ENCODE measurements at regions of chr13 and their contacts with region 1.

Region 1: GRCh38 chr13:50123862-50124536 is 108.8 kb downstream of the KCNRG start:
- DNase-seq: peak; percentile 72 to 85
- H3K4me3 ChIP-seq: peak overlapping the region; percentile 52 to 62
- H3K27ac ChIP-seq: peak overlapping the region; percentile 92 to 93
- H3K4me1 ChIP-seq: no peaks in the 10 kb centered on the region
- H3K27me3 ChIP-seq: peaks cover 0 to 4% of the 10 kb centered on the region in 2 donors
- CTCF ChIP-seq: peak in 1 of 4 experiments; percentile 9
- POLR2A ChIP-seq: peak; percentile 78 to 85

Region 2: GRCh38 chr13:49792550-49793324 is 331.3 kb before region 1 on chr13 and contains the start of gene KPNA3:
- intact Hi-C with region 1: loop called (anchors 10 kb)
- DNase-seq: peak; percentile 95 to 96
- H3K4me3 ChIP-seq: peak within 1 kb of the TSS; percentile 45 to 86
- H3K27ac ChIP-seq: peak within 1 kb of the TSS; percentile 92 to 94
- H3K4me1 ChIP-seq: no peaks in the 10 kb centered on the region
- H3K27me3 ChIP-seq: no peaks in the 10 kb centered on the region
- CTCF ChIP-seq: peak in 3 of 4 experiments; percentile 2 to 18 (median 17)
- POLR2A ChIP-seq: peak; percentile 56 to 66
- total RNA-seq, gene KPNA3: 9.1 to 49.2 (median 30.3) TPM

Region 3: GRCh38 chr13:49936085-49936940 is 187.7 kb before region 1 on chr13 and contains the start of gene SPRYD7:
- intact Hi-C with region 1: loop called (anchors 10 kb)
- DNase-seq: peak; percentile 97 to 99
- H3K4me3 ChIP-seq: peak within 1 kb of the TSS; percentile 71 to 81
- H3K27ac ChIP-seq: peak within 1 kb of the TSS; percentile 70 to 74
- H3K4me1 ChIP-seq: peaks cover 0 to 3% of the 10 kb centered on the region in 2 donors
- H3K27me3 ChIP-seq: no peaks in the 10 kb centered on the region
- CTCF ChIP-seq: peak; percentile 92 to 95 (median 94)
- POLR2A ChIP-seq: peak in 1 of 2 donors; percentile 54
- total RNA-seq, gene SPRYD7: 0.59 to 10.2 (median 4.3) TPM

Region 4: DNA sequence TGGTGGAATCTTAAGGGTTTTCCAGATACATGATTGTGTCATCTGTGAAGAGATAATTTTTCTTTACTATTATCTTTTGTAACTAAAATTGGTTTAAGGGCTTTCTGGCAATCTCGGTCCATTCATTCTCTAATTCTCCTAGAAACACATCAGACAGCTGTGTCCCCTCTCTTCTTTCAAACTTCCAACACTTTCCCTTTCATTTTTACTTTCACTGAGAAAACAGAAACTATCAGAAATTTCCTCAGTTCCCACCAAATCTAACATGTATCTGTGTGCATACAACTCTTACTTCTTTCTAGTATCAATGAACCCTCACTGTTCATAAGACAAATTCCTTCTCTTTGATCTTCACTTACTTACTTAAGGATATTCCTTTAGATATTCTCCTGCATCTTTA is 68.5 kb before region 1 on chr13:
- intact Hi-C with region 1: no loop called
- DNase-seq: no peak
- H3K4me3 ChIP-seq: no peak overlapping the region
- H3K27ac ChIP-seq: no peak overlapping the region
- H3K4me1 ChIP-seq: no peaks in the 10 kb centered on the region
- H3K27me3 ChIP-seq: no peaks in the 10 kb centered on the region
- CTCF ChIP-seq: no peak
- POLR2A ChIP-seq: no peak